ENCODE measurements at regions of chr17 and their contacts with region 1.

Region 1: GRCh38 chr17:40021451-40021971 is 6.3 kb downstream of the CSF3 start:
- DNase-seq: no peak
- H3K4me3 ChIP-seq: no peak overlapping the region
- H3K27ac ChIP-seq: peak overlapping the region in 3 of 4 donors; percentile 38 to 80 (median 67)
- H3K4me1 ChIP-seq: peaks cover 12 to 61% (median 52%) of the 10 kb centered on the region in 4 donors
- H3K27me3 ChIP-seq: no peaks in the 10 kb centered on the region
- CTCF ChIP-seq: no peak
- EP300 ChIP-seq: no peak
- POLR2A ChIP-seq: no peak

Region 2: GRCh38 chr17:40121181-40122135 is 99.9 kb after region 1 on chr17 and contains the start of gene MSL1:
- in situ Hi-C with region 1: no loop called
- intact Hi-C with region 1: loop called (anchors 10 kb)
- DNase-seq: peak; percentile 91
- H3K4me3 ChIP-seq: peak within 1 kb of the TSS; percentile 88 to 99 (median 95)
- H3K27ac ChIP-seq: peak within 1 kb of the TSS; percentile 96 to 98 (median 98)
- H3K4me1 ChIP-seq: peaks cover 19 to 48% (median 31%) of the 10 kb centered on the region in 4 donors
- H3K27me3 ChIP-seq: no peaks in the 10 kb centered on the region
- CTCF ChIP-seq: peak in 1 of 5 experiments; percentile 3
- EP300 ChIP-seq: no peak
- POLR2A ChIP-seq: peak; percentile 64
- total RNA-seq, gene MSL1: 73.9 to 258 (median 90.6) TPM

Region 3: DNA sequence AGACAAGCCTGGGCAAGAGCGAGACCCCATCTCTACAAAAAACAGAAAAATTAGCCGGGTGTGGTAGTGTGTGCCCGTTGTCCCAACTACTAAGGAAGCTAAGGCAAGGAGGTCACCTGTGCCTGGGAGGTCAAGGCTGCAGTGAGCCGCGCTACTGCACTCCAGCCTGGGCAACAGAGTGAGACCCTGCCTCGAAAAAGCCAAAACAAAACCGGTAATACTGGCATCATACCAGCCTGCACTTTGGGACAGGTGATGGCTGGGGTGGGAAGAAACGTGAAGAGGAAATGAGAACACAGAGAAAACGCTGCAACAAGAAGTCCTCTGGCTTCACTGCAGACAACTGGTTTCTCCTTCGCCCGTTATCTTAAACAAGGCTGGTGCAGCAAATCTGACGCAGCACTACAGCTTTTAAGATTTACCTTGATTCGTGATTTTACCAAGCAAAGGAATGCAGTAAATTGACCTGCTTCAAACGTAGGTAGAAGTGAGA is 118.1 kb after region 1 on chr17:
- in situ Hi-C with region 1: no loop called
- intact Hi-C with region 1: no loop called
- DNase-seq: peak; percentile 22
- H3K4me3 ChIP-seq: peak overlapping the region; percentile 18 to 84 (median 58)
- H3K27ac ChIP-seq: peak overlapping the region; percentile 92 to 99 (median 98)
- H3K4me1 ChIP-seq: peaks cover 12 to 42% (median 20%) of the 10 kb centered on the region in 4 donors
- H3K27me3 ChIP-seq: no peaks in the 10 kb centered on the region
- CTCF ChIP-seq: peak in 1 of 5 experiments; percentile 34
- EP300 ChIP-seq: no peak
- POLR2A ChIP-seq: no peak

Region 4: GRCh38 chr17:40191237-40192208 is 170.0 kb after region 1 on chr17:
- in situ Hi-C with region 1: no loop called
- intact Hi-C with region 1: loop called (anchors 10 kb)
- DNase-seq: peak; percentile 77
- H3K4me3 ChIP-seq: peak overlapping the region; percentile 31 to 57 (median 38)
- H3K27ac ChIP-seq: peak overlapping the region; percentile 20 to 74 (median 44)
- H3K4me1 ChIP-seq: peaks cover 0 to 13% (median 7%) of the 10 kb centered on the region in 4 donors
- H3K27me3 ChIP-seq: no peaks in the 10 kb centered on the region
- CTCF ChIP-seq: peak in 4 of 5 experiments; percentile 31 to 52 (median 40)
- EP300 ChIP-seq: no peak
- POLR2A ChIP-seq: no peak